ENCODE measurements at regions of chr7 and their contacts with region 1.

Region 1: GRCh38 chr7:139645572-139646523 is 122.4 kb downstream of the CLEC2L start:
- DNase-seq: peak; percentile 86
- ATAC-seq: peak; percentile 57 to 62

Region 2: GRCh38 chr7:139702811-139703486 is 57.1 kb after region 1 on chr7:
- intact Hi-C with region 1: loop called in 1 of 2 experiments (anchors 5 kb)
- DNase-seq: no peak
- ATAC-seq: peak; percentile 47 to 64

Region 3: DNA sequence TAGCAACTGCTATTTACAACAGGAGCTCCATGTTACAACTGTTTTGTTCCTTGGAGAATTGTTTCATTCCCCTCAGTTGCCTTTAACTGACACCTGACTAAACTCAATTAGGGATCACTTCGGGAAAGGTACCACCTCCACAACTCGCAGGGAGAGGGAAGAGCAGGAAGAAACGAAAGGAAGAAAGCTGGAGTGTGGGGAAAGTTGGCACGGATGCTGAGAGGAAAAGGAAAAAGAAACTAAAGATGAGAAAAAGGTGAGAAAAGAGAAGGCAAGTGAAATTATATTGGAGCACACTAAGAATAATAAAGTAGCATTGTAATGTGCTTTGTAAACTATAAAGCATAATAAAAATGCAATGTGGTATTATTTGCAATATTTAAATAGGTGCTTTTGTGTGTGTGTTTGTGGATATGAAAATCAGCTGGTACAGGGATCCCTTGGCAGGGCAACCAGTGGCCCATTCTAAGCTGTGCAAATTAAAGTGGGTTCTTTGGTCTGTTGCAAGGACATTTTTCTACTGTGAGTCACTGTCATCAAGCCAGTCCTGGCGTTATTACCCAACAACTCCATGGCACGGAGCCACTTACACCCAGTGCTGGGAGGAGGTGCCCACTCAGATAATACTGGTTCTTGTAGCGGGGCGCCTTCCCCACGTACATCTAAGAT is 86.1 kb after region 1 on chr7:
- intact Hi-C with region 1: loop called in 1 of 2 experiments (anchors 5 kb)
- DNase-seq: peak; percentile 90
- ATAC-seq: peak; percentile 76 to 81

Region 4: GRCh38 chr7:139797607-139798006 is 151.8 kb after region 1 on chr7:
- intact Hi-C with region 1: no loop called
- DNase-seq: no peak
- ATAC-seq: no peak

Measured in left cardiac atrium (tissue), 4 donors.